ENCODE measurements at regions of chr14 and their contacts with region 1.

Region 1: DNA sequence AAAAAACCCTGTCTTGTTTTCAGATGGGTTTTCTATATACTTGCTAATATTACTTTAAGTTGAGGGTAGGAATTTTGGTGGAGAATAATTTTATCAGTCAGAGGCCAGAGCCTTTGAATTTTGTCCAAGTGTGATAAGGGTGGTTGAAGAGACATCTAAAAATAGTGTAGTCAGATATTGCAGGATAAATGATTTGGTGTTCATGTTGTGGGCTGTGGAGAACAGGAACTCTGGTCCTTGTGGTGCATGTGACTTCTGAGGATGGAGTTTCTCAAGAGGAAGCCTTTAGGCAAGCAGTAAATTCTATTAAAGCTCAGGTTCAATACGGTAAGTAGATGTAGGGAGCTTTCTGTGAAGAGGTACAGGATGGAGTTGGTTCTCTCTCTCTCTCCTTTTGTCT is 2.8 kb downstream of the ADAM21 start:
- DNase-seq: no peak
- ATAC-seq: no peak
- H3K4me3 ChIP-seq: no peak overlapping the region
- H3K4me3 Mint-ChIP-seq: no peak overlapping the region
- H3K27ac ChIP-seq: no peak overlapping the region
- H3K27ac Mint-ChIP-seq: no peak overlapping the region
- H3K4me1 ChIP-seq: no peaks in the 10 kb centered on the region
- H3K4me1 Mint-ChIP-seq: no peaks in the 10 kb centered on the region
- H3K27me3 ChIP-seq: no peaks in the 10 kb centered on the region
- H3K27me3 Mint-ChIP-seq: peaks cover 7% of the 10 kb centered on the region
- CTCF ChIP-seq: no peak

Region 2: GRCh38 chr14:70245026-70245425 is 209.7 kb before region 1 on chr14:
- CTCF ChIA-PET with region 1: no interaction called
- POLR2A ChIA-PET with region 1: no interaction called
- intact Hi-C with region 1: loop called (anchors 5 kb)
- DNase-seq: no peak
- ATAC-seq: no peak
- H3K4me3 ChIP-seq: no peak overlapping the region
- H3K4me3 Mint-ChIP-seq: no peak overlapping the region
- H3K27ac ChIP-seq: no peak overlapping the region
- H3K27ac Mint-ChIP-seq: no peak overlapping the region
- H3K4me1 ChIP-seq: no peaks in the 10 kb centered on the region
- H3K4me1 Mint-ChIP-seq: peaks cover 3% of the 10 kb centered on the region
- H3K27me3 ChIP-seq: peaks cover 0 to 3% (median 0%) of the 10 kb centered on the region in 4 experiments
- H3K27me3 Mint-ChIP-seq: peaks cover 45% of the 10 kb centered on the region
- CTCF ChIP-seq: no peak

Measured in B cell (primary cell).